Stomach (tissue), 19 donors: ENCODE measurements at regions of chr9 and their contacts with region 1.

Region 1: GRCh38 chr9:127783111-127784008 is 2.5 kb upstream of the CDK9 start:
- DNase-seq: peak; percentile 57 to 67
- H3K4me3 ChIP-seq: no peak overlapping the region
- H3K27ac ChIP-seq: peak overlapping the region; percentile 50 to 99 (median 96)
- H3K4me1 ChIP-seq: peaks cover 18 to 78% (median 45%) of the 10 kb centered on the region in 4 donors
- H3K27me3 ChIP-seq: no peaks in the 10 kb centered on the region
- CTCF ChIP-seq: no peak
- EP300 ChIP-seq: no peak
- POLR2A ChIP-seq: no peak

Region 2: DNA sequence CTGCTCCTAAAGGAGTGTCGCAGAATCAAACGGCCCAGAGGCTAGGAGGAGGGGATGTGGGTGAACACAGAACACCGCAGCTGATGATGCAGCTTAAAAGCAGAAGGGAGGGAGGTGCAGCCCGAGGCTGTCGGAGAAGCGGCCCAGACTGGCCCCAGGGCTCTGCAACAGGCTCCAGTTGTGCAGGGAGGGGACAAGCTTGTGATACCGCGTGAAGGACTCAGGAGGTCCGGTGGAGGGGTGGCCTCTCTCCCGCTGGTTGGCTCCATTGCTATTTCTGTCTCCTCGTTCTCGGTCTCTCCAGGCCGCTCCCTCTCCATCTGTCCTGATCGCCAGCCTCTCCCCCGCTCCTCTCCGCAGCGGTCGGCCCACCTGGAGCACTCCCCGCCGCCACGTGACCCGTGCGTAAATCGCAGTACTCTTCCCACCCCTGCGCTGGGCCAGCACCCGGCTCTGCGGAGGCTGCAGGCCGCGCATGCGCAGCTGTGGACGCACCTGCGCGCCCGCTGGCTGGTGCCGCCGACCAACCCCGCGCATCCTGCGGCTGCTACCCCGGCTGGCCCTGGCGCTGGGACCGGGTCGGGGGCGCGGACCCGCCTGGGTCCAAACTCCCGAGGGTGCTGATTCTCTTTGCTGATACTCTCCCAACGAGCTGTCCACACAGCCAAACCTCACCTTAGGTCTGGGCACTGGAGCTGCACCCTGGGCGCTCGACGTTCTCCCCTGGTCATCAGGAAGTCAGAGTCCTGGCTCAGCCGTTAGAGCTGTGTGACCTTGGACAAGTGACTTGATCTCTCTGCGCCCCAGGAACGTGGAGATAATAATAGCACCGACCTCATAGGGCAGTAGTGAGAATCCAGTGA is 175.0 kb before region 1 on chr9:
- intact Hi-C with region 1: loop called (anchors 5 kb)
- DNase-seq: peak; percentile 81 to 93
- H3K4me3 ChIP-seq: peak overlapping the region; percentile 36 to 49 (median 45)
- H3K27ac ChIP-seq: peak overlapping the region; percentile 11 to 76 (median 61)
- H3K4me1 ChIP-seq: peaks cover 19 to 43% (median 32%) of the 10 kb centered on the region in 4 donors
- H3K27me3 ChIP-seq: peaks cover 0 to 20% (median 13%) of the 10 kb centered on the region in 3 donors
- CTCF ChIP-seq: no peak
- EP300 ChIP-seq: no peak
- POLR2A ChIP-seq: no peak

Region 3: DNA sequence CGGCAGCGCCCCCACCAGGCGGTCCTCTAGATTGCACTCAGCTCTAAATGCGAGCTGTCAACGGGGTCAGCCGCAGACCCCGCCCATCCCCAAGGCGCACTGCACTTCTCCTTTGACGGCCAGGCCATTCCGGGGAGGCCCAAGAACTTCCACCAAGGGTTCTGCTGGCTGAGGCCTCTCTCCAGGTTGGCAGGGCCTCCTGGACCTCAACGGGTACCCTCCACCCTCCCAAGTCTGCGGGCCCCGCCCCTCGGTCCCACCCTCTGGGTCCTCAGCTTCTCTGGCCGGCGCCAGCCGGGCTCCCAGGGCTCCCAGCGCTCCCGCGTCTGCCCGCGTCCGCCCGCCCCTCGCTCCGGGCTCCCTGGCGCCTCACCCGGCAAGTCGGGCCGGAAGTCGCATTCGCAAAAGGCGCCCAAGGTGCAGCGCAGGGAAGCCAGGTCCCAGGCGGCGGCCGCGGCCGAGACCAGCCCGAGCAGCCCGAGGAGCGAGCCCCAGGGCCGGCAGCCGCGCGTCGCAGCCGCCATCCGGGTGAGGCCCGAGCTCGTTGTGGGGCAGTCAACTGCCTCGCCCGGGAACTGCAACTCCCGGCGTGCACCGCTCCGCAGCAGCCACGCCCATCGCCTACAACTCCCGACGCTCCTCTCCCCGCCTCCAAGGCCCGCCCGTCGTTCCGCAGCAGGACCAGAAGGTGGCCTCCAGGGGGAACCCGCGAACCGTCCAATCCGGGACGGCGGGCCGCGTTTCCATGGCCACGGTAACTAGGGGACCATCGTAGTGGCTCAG is 48.4 kb before region 1 on chr9 and contains the start of gene TOR2A:
- intact Hi-C with region 1: loop called (anchors 5 kb)
- DNase-seq: peak; percentile 97 to 100
- H3K4me3 ChIP-seq: peak within 1 kb of the TSS; percentile 70 to 78 (median 76)
- H3K27ac ChIP-seq: peak within 1 kb of the TSS; percentile 96 to 99 (median 97)
- H3K4me1 ChIP-seq: peaks cover 7 to 23% (median 20%) of the 10 kb centered on the region in 4 donors
- H3K27me3 ChIP-seq: no peaks in the 10 kb centered on the region
- CTCF ChIP-seq: peak in 6 of 7 experiments; percentile 69 to 99 (median 90)
- EP300 ChIP-seq: no peak
- POLR2A ChIP-seq: peak in 1 of 4 donors; percentile 45
- total RNA-seq, gene TOR2A: 5.0 to 87.8 (median 14.6) TPM

Region 4: DNA sequence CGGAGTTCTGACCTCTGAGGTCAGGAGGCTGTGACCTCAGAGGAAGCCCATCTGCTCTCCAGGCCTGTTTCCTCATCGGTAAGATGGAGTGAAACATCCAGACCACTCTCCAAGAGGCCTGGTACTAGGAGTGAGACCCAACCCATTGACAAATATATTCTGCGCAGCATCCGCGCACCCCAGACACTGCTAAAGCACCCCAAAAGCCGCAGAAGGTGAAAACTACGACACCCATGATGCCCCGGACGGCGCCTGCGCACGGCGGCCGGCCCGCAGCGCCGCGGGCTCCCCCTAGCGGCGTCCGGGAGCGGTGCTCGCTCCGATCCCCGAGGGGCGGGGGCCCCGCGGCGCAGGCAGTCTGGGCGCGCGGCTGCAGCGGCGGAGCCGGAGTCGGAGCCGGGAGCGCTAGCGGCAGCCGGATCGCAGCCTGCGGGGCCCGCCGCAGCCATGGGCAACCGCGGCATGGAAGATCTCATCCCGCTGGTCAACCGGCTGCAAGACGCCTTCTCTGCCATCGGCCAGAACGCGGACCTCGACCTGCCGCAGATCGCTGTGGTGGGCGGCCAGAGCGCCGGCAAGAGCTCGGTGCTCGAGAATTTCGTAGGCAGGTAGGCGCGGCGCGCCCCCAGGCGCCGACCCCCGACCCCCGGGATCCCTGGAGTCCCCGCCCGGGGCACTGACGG is 419.8 kb after region 1 on chr9 and contains the start of gene DNM1:
- intact Hi-C with region 1: no loop called
- DNase-seq: peak; percentile 69 to 91
- H3K4me3 ChIP-seq: peak within 1 kb of the TSS; percentile 60 to 89 (median 68)
- H3K27ac ChIP-seq: peak within 1 kb of the TSS in 3 of 5 donors; percentile 40 to 75 (median 58)
- H3K4me1 ChIP-seq: peaks cover 11 to 18% (median 15%) of the 10 kb centered on the region in 4 donors
- H3K27me3 ChIP-seq: peaks cover 6 to 42% (median 26%) of the 10 kb centered on the region in 3 donors
- CTCF ChIP-seq: peak in 4 of 7 experiments; percentile 28 to 98 (median 86)
- EP300 ChIP-seq: no peak
- POLR2A ChIP-seq: no peak
- total RNA-seq, gene DNM1: 20.1 to 60.8 (median 25.0) TPM